ENCODE measurements at regions of chr14 and their contacts with region 1.

Region 1: DNA sequence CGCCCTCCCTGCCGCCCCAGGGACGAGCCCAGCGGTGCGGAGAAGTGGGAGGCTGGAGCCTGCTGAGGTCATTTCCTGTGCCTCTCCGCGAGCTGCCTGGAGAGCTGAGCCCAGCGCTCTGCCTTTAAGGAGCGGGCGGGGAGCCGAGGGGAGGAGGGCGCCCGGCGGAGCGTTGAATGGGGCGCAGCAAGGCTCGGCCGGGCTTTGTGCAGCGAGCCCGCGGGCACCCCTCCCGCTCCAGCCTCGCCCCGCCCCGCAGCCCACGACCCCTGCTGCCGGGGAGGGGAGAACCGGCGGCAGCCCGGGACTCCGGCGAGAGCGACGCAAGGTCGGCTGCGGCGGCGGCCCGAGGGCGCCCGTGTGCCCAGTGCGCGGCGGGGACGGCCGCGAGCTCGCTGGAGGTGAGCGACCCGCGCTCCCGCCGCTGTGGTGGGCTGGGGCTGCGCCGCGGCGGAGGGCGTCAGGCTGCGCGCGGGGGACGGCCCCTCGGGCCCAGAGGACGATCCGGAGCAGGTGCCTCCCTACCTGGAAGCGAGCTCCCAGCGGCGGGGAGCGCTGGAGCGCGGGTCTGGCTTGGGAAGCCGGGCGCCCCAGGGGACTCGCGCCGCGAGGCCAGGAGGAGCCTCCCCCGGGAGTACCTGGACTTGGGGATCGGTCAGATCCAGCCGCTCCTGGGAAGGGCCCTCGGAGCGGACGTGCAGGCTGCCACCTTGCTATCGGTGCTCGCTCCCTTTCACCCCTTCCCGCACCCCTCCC is at the start of gene PLEKHH1:
- DNase-seq: peak; percentile 58
- H3K4me3 Mint-ChIP-seq: peak within 1 kb of the TSS; percentile 75
- H3K27ac Mint-ChIP-seq: no peak within 1 kb of the TSS
- H3K4me1 Mint-ChIP-seq: no peaks in the 10 kb centered on the region
- H3K27me3 Mint-ChIP-seq: peaks cover 51% of the 10 kb centered on the region
- total RNA-seq, gene PLEKHH1: 0.96 and 2.4 TPM in 2 replicates

Region 2: GRCh38 chr14:67514650-67515385 is 18.4 kb before region 1 on chr14:
- intact Hi-C with region 1: loop called (anchors 2 kb)
- DNase-seq: peak; percentile 39
- H3K4me3 Mint-ChIP-seq: peak overlapping the region; percentile 82
- H3K27ac Mint-ChIP-seq: peak overlapping the region; percentile 36
- H3K4me1 Mint-ChIP-seq: peaks cover 9% of the 10 kb centered on the region
- H3K27me3 Mint-ChIP-seq: peaks cover 46% of the 10 kb centered on the region

Region 3: DNA sequence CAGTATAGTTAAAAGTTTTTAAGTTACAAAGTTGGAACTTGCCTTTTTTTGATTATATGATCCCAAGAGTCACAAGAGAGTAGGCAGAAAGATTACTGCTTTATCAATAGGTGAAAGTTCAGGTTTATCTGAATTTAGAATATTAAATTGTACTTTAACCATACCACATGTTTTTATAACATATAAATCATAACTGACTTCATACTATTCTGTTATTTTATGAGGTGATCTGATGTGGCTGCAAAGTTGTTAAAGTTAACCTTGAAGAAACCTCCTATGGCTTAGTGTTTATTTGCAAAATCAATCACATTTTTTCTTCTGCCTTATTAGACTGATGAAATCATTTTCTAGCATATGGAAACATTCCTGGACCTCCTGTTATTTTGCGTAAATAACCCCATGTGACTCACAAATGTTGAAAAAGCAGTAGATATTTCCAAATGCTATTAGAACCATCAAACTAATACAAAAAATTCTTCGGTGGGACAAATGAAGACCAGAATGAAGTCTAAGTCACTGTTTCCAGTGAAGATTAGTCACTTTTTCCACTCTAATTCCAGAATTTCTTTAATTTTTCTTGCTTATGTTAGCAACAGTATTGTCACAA is 418.5 kb after region 1 on chr14:
- intact Hi-C with region 1: no loop called
- DNase-seq: no peak
- H3K4me3 Mint-ChIP-seq: no peak overlapping the region
- H3K27ac Mint-ChIP-seq: no peak overlapping the region
- H3K4me1 Mint-ChIP-seq: no peaks in the 10 kb centered on the region
- H3K27me3 Mint-ChIP-seq: no peaks in the 10 kb centered on the region